ENCODE measurements at regions of chr11 and their contacts with region 1.

Region 1: DNA sequence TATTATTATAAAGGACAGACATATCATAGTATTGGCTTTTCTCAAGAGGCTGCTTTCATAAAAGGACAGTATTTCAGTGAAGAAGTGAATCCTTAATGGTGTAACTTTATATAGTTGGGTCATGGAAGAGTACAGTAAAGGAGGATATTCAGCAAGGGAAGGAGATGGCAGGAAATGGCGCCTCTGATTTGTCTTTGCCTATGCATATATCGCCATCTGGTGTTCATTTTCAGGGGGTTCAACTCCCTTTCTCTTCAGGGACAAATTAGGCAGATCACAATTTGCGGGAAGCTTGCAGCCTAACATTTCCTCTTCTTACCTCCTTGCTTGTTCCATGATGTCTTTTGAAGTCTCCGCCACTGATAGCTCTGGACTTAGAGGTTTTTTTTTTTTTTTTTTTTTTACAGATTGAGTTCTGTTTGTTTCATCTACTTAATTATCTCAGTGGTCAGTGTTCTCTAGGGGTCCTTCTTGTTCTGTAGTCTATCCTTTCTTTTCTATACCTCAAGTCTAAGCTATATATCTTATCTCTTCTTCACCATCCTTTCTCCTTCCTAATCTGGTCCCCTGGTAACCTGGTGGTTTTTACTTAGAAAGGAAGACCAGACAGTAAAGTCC is 21.8 kb upstream of the RRM1 start:
- DNase-seq: no peak
- ATAC-seq: peak; percentile 92

Region 2: GRCh38 chr11:3849297-3849874 is 223.4 kb before region 1 on chr11:
- intact Hi-C with region 1: loop called (anchors 2 kb)
- DNase-seq: no peak
- ATAC-seq: peak; percentile 72

Region 3: GRCh38 chr11:3971756-3972404 is 100.9 kb before region 1 on chr11:
- intact Hi-C with region 1: no loop called
- DNase-seq: no peak
- ATAC-seq: no peak